H1 (cell line): ENCODE measurements at regions of chr14 and their contacts with region 1.

Region 1: GRCh38 chr14:35416108-35416750 is 11.7 kb upstream of the NFKBIA start:
- DNase-seq: no peak
- H3K4me3 ChIP-seq: no peak overlapping the region
- H3K27ac ChIP-seq: no peak overlapping the region
- H3K4me1 ChIP-seq: peaks cover 0 to 12% (median 2%) of the 10 kb centered on the region in 4 experiments; a peak in 5 of 7 replicates
- H3K27me3 ChIP-seq: no peaks in the 10 kb centered on the region
- CTCF ChIP-seq: no peak
- EP300 ChIP-seq: no peak
- POLR2A ChIP-seq: no peak
- RAD21 ChIP-seq: no peak

Region 2: GRCh38 chr14:35140718-35141581 is 275.3 kb before region 1 on chr14:
- CTCF ChIA-PET with region 1: interaction called, 198 read pairs
- POLR2A ChIA-PET with region 1: interaction called, 3 read pairs
- DNase-seq: no peak
- H3K4me3 ChIP-seq: no peak overlapping the region
- H3K27ac ChIP-seq: no peak overlapping the region
- H3K4me1 ChIP-seq: no peaks in the 10 kb centered on the region; a peak in 1 of 7 replicates
- H3K27me3 ChIP-seq: no peaks in the 10 kb centered on the region
- CTCF ChIP-seq: peak in 1 of 3 experiments; percentile 12; a peak in 1 of 4 replicates
- EP300 ChIP-seq: no peak
- POLR2A ChIP-seq: no peak
- RAD21 ChIP-seq: peak in 1 of 2 experiments; percentile 51; a peak in 3 of 4 replicates

Region 3: DNA sequence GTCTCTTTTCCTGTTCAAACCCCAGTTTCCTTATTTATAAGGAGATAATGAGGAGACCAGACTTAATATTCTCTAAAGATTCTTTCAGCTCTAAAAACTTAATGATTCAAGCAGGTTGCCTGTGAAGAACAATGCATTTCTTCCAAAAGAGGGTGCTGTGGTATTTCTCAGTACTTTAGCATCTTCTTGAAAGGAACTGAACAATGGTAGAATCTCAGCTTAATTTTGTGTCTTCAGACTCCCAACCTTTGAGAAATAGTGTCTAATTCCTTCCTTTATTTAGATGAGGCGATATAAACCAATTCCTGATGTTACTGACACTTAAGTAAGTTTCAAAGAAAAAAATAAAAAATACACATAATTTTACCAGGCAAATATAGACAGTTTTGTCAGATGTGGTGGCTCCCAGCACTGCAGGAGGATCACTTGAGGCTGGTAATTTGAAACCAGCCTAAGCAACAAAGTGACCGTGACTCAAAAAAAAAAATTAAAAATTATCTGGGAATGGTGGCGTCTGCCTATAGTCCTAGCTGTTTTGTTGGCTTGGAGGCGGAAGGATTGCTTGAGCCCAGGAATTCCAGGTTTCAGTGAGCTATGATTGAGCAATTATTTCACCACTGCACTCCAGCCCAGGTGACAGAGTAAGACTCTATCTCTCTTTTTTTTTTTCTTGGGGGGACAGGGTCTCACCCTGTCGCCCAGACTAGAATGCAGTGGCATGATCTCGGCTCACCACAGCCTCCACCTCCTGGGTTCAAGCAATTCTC is 200.9 kb before region 1 on chr14:
- CTCF ChIA-PET with region 1: interaction called, 15 read pairs
- POLR2A ChIA-PET with region 1: no interaction called
- DNase-seq: no peak
- H3K4me3 ChIP-seq: no peak overlapping the region
- H3K27ac ChIP-seq: no peak overlapping the region
- H3K4me1 ChIP-seq: peaks cover 0 to 4% (median 0%) of the 10 kb centered on the region in 4 experiments; a peak in 2 of 7 replicates
- H3K27me3 ChIP-seq: no peaks in the 10 kb centered on the region
- CTCF ChIP-seq: peak in 2 of 3 experiments; percentile 31 to 48; a peak in 2 of 4 replicates
- EP300 ChIP-seq: no peak
- POLR2A ChIP-seq: no peak
- RAD21 ChIP-seq: peak; percentile 60 to 67

Region 4: GRCh38 chr14:35365130-35366055 is 50.8 kb before region 1 on chr14:
- CTCF ChIA-PET with region 1: interaction called, 11 read pairs
- POLR2A ChIA-PET with region 1: no interaction called
- DNase-seq: no peak
- H3K4me3 ChIP-seq: no peak overlapping the region
- H3K27ac ChIP-seq: no peak overlapping the region
- H3K4me1 ChIP-seq: peaks cover 0 to 18% (median 7%) of the 10 kb centered on the region in 4 experiments; a peak in 5 of 7 replicates
- H3K27me3 ChIP-seq: no peaks in the 10 kb centered on the region
- CTCF ChIP-seq: no peak
- EP300 ChIP-seq: no peak
- POLR2A ChIP-seq: no peak
- RAD21 ChIP-seq: no peak

Region 5: GRCh38 chr14:35390577-35391387 is 25.4 kb before region 1 on chr14:
- CTCF ChIA-PET with region 1: no interaction called
- POLR2A ChIA-PET with region 1: no interaction called
- DNase-seq: no peak
- H3K4me3 ChIP-seq: no peak overlapping the region
- H3K27ac ChIP-seq: no peak overlapping the region
- H3K4me1 ChIP-seq: peaks cover 0 to 3% (median under 1%) of the 10 kb centered on the region in 4 experiments; a peak in 5 of 7 replicates
- H3K27me3 ChIP-seq: no peaks in the 10 kb centered on the region
- CTCF ChIP-seq: no peak
- EP300 ChIP-seq: no peak
- POLR2A ChIP-seq: no peak
- RAD21 ChIP-seq: no peak

Region 6: DNA sequence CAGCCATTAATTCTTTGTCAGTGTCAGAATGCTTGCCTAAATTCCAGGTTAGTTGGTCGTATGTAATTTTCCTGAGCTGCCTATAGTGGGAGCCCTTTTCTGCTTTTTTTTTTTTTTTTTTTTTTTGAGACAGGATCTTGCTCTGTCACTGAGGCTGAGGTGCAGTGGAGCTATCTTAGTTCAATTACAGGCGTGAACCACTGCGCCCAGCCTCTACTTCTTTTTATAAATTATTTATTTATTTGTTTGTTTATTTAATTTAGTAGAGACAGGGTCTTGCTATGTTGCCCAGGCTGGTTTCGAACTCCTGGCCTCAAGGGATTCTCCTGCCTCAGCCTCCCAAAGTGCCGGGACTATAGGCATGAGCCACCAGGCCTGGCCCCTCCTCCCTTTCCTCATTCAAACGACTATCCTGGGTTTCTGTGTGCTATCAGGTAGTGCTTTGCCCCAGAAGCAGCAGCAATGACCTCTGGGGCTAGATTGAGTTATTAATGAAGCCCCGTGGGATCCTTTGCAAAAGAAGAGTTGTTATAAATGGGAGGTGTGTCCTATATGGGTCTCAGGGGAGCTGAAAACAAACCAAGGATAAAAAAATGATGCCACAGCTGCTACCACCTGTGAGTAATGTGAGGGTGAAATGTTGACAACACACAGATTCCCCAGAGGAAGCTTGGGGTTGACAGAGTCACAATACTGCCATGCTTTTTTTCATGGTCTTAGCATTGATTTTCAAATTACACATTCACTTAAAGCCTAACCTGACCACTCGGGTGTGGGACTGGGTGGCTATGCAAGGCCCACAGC is 22.9 kb after region 1 on chr14:
- CTCF ChIA-PET with region 1: interaction called, 15 read pairs
- POLR2A ChIA-PET with region 1: no interaction called
- DNase-seq: no peak
- H3K4me3 ChIP-seq: no peak overlapping the region
- H3K27ac ChIP-seq: no peak overlapping the region
- H3K4me1 ChIP-seq: no peaks in the 10 kb centered on the region
- H3K27me3 ChIP-seq: no peaks in the 10 kb centered on the region
- CTCF ChIP-seq: peak in 2 of 3 experiments; percentile 49 to 63; a peak in 2 of 4 replicates
- EP300 ChIP-seq: no peak
- POLR2A ChIP-seq: no peak
- RAD21 ChIP-seq: peak; percentile 53 to 62

Region 7: DNA sequence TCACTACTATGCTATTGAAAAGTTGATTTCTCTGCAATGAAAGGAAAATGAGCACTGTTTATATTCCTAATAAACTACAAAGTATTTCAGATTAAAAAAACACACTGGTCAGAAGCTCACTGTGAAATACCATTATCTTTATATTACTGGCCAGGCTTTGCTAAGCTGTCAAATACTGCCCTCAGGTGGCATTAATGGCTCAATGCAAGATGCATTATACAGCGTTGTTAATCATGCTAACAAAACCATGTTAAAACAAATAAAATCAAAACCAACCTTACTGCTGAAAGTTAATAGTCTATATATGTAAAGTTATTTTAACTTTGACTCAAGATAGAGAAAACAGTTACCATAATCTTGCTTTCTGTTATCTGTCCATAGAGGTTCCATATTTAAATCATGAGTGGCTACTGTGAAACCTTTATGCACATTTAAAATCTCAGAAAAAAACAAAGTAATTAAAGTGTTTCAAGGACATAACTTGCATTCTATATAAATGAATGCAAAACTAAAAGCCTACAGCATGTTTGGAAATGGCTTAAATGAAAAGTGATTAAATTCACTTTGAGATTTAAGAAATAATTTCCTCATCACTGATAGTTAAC is 271.2 kb after region 1 on chr14:
- CTCF ChIA-PET with region 1: interaction called, 13 read pairs
- POLR2A ChIA-PET with region 1: no interaction called
- DNase-seq: no peak
- H3K4me3 ChIP-seq: no peak overlapping the region
- H3K27ac ChIP-seq: no peak overlapping the region
- H3K4me1 ChIP-seq: no peaks in the 10 kb centered on the region
- H3K27me3 ChIP-seq: no peaks in the 10 kb centered on the region
- CTCF ChIP-seq: peak in 2 of 3 experiments; percentile 72 to 75; a peak in 3 of 4 replicates
- EP300 ChIP-seq: no peak
- POLR2A ChIP-seq: no peak
- RAD21 ChIP-seq: peak; percentile 96 to 97